ENCODE measurements at regions of chr5 and their contacts with region 1.

Region 1: DNA sequence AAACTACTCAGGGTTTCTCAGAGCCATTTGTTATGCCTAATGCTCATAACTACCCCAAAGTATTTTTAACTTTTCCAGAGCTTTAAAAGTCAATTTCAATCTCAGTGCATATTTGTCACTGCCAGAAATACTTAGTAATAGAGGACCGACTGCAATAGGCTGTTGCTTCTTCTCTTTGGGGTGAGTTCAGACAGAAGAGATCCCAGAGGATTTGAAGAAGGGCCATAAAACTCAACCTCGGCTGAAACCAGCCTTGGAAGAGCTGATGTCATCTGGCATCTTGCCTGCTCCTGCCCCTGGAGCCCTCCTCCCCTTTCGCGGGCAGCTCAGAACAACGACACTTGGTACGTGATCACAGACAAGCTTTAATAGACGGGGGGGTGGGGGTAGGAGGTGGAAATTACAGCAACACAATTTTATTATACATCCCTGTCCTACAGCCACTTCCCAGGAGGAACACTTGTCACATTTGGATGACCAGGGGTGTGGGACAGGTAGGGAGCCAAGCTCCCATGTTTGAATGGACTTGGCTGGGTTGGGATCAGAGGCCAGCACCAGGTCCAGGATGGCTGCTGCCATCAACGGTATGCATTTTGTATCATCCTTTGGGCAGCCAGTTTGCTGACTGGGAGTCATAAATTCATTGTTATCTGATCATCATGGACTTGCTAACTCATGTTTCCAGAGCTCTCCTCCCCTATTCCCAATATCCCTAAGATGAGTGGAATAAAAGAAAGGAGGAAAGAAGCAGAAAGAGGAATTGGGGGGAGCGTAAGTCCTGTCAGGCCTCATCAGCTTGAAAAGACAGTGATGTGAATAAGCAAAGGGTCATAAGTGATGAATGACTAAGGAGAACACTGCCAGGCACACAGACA is 186.6 kb upstream of the PANK3 start:
- DNase-seq: no peak
- ATAC-seq: peak; percentile 78

Region 2: GRCh38 chr5:167694325-167695147 is 1071.3 kb before region 1 on chr5:
- intact Hi-C with region 1: loop called (anchors 5 kb)
- DNase-seq: no peak
- ATAC-seq: no peak

Region 3: DNA sequence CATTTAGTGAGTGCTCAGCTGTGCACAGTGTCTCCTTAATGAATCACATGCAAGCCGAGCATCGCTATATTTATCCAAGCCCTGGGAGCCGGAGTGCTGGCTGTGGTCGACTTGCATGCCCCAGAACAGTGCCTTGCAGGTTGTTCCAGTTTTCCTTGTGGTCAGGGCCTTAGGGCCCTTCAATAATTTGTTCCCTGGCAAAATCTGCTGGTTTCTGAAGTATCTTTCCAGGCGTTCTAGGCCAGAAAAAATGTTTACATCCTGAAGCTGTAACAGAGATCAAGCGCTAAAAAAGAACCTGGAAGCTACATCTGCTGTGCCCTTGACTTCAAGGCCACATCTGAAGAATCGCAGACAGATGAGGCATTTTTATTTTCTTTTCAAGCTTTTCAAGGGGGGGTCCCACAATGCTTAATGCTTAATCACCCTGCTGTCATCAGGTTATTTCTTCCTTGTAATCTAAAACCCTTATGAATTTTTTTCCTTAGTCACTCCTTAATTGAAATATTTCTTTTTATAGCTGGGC is 977.0 kb after region 1 on chr5:
- intact Hi-C with region 1: no loop called
- DNase-seq: no peak
- ATAC-seq: peak; percentile 73

Measured in sciatic nerve (tissue), 2 donors.